ENCODE measurements at regions of chr1 and their contacts with region 1.

Region 1: DNA sequence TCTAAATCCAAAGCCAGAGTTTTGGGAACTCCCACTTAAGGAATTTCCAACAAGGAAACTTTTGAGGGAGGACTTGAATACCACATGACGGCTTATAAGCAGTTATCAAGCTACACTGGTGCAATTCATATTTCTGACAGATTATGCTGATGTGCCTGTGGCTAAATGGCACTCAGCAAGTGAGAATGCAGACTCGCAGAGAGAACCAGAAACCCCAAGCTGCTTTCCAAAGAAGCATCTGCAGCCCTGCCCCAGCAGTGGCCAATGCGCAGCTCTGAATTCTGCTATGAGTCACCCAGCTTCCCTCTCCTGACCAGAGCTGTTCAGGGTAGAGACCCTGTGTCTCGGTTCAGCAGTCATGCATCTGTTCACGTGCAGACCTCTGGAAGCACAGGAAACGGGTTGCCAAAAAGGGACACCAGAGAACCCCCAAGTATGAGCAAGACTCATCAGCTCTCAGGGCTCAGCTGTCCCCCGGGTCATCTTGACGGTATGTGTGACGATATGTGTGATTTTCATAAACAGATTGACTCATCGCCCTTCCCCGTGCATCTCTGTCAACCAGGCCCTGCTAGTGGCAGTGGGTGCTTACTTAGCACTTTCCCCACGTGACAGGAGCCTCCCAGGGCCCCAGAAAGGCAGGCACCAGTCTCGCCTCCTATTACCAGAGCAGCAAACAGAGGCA is 76.3 kb downstream of the ITPKB start:
- DNase-seq: peak; percentile 73
- ATAC-seq: peak; percentile 84
- H3K4me3 Mint-ChIP-seq: peak overlapping the region; percentile 56
- H3K27ac Mint-ChIP-seq: peak overlapping the region; percentile 92
- H3K4me1 Mint-ChIP-seq: peaks cover 89% of the 10 kb centered on the region
- H3K27me3 Mint-ChIP-seq: no peaks in the 10 kb centered on the region
- CTCF ChIP-seq: no peak

Region 2: DNA sequence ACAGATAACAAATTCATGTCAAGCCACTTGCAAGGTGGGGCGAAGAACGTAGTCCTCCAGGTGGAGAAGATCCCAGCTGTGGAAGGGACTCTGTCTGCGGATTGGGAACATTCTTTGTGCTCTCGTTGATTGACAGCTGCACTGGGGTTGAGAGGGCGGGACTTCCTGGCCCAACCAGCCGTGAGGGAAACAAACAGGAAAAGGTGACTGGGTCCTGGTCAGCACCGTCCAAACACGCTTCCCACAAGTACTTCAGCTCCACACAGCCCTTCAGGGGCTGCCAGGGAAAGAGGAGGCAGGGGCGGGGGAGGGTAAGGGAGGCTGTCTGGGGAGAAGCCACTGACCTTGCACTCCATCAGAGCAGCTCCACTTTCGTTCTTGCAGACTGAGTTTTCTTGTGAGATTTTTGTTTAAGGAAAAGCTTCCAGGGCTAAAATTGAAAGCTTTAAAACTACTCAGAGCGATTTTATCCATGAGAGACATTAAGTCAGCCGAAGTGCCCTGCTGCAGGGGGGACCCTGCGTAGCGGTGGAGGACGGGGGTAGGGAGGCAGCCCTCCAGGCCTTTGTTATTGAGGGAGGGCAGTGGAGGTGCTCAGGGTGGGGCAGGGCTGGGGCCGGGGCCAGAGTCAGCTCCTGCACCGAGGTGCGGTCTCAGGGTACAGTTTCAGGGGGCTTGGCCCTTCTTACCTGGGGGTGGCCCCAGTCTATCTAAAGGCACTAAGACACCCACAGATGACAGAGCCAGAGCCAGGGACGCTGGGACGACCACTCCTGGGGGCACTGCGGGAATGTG is 135.8 kb before region 1 on chr1:
- CTCF ChIA-PET with region 1: no interaction called
- POLR2A ChIA-PET with region 1: no interaction called
- intact Hi-C with region 1: no loop called
- DNase-seq: no peak
- ATAC-seq: no peak
- H3K4me3 Mint-ChIP-seq: no peak overlapping the region
- H3K27ac Mint-ChIP-seq: no peak overlapping the region
- H3K4me1 Mint-ChIP-seq: no peaks in the 10 kb centered on the region
- H3K27me3 Mint-ChIP-seq: peaks cover 12% of the 10 kb centered on the region
- CTCF ChIP-seq: no peak

Region 3: GRCh38 chr1:226626577-226626956 is 36.2 kb before region 1 on chr1:
- CTCF ChIA-PET with region 1: interaction called, 12 read pairs
- POLR2A ChIA-PET with region 1: interaction called, 5 read pairs
- intact Hi-C with region 1: no loop called
- DNase-seq: peak; percentile 68
- ATAC-seq: peak; percentile 93
- H3K4me3 Mint-ChIP-seq: peak overlapping the region; percentile 55
- H3K27ac Mint-ChIP-seq: peak overlapping the region; percentile 59
- H3K4me1 Mint-ChIP-seq: peaks cover 47% of the 10 kb centered on the region
- H3K27me3 Mint-ChIP-seq: no peaks in the 10 kb centered on the region
- CTCF ChIP-seq: peak; percentile 76

Region 4: DNA sequence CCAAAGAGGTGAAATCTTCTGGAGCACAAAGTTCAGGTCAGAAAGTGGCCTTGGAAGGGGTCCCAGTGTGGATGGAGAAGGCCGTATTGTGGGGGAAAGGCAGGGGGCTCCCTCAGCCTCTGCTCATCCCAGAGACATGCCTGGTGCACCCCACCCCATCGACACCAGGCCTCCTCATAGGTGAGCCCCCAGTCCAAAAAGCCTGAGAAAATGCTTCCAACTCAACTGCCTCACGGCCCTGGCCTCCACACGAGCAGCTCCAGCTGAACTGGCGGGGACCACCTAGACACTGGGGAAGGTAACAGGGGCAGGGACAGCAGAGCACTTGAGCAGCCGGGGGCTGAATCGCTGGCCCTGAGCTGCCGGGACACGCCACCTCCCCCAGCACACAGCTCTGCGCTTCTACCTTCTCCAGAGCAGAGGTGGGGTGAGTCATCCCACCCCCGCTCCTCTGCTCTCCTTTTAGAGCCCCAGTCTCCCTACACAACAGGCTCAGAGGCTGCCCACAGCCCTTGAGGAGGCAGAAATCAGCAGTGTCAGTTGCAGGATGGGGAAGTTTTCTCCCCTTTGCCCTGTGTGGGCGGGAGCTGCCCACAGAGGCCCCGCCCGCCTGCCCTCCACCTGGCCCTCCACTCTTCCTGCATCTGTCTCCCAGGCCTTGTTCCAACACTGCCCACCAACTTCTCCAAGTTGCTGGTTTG is 19.8 kb before region 1 on chr1:
- CTCF ChIA-PET with region 1: interaction called, 31 read pairs
- POLR2A ChIA-PET with region 1: interaction called, 163 read pairs
- intact Hi-C with region 1: loop called (anchors 1 kb)
- DNase-seq: peak; percentile 52
- ATAC-seq: peak; percentile 63
- H3K4me3 Mint-ChIP-seq: peak overlapping the region; percentile 67
- H3K27ac Mint-ChIP-seq: peak overlapping the region; percentile 88
- H3K4me1 Mint-ChIP-seq: peaks cover 76% of the 10 kb centered on the region
- H3K27me3 Mint-ChIP-seq: no peaks in the 10 kb centered on the region
- CTCF ChIP-seq: no peak

Region 5: DNA sequence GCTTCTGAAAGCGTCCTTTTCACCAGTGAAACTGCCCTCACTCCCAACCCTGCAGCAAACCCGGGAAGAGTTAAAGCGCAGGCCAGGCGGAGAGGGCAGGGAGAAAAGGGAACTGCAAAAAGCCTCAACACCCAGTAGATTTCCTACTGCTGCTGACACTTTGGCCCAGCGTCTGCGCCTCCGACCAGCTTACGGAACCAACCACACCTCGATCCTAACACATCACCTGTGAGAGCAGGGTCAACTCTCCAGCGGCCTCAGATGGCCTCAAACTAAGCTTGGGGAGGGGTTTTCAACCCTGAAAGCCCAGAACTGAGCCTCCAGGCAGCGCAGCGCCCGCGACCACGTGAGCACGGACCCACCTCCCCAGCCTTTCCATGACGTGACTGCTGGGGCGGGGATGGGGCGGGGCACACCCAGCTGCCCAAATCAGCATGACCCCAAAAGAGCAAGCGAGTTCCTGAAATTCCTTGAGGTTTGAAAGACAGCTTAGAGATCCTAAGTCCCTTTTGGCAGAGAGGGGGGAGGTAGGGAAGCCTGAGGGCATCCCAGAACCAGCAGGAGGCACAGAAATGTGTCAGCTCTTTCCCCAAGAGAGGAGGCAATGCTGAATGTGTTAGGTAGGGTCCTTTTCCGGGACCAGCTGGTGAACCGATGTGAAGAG is 17.2 kb after region 1 on chr1:
- CTCF ChIA-PET with region 1: interaction called, 13 read pairs
- POLR2A ChIA-PET with region 1: interaction called, 451 read pairs
- intact Hi-C with region 1: loop called (anchors 1 kb)
- DNase-seq: peak; percentile 69
- ATAC-seq: peak; percentile 38
- H3K4me3 Mint-ChIP-seq: peak overlapping the region; percentile 86
- H3K27ac Mint-ChIP-seq: peak overlapping the region; percentile 97
- H3K4me1 Mint-ChIP-seq: peaks cover 99% of the 10 kb centered on the region
- H3K27me3 Mint-ChIP-seq: no peaks in the 10 kb centered on the region
- CTCF ChIP-seq: no peak

Region 6: GRCh38 chr1:226697151-226697939 is 34.6 kb after region 1 on chr1:
- CTCF ChIA-PET with region 1: interaction called, 11 read pairs
- POLR2A ChIA-PET with region 1: interaction called, 261 read pairs
- intact Hi-C with region 1: loop called (anchors 1 kb)
- DNase-seq: peak; percentile 54
- ATAC-seq: peak; percentile 82
- H3K4me3 Mint-ChIP-seq: peak overlapping the region; percentile 77
- H3K27ac Mint-ChIP-seq: peak overlapping the region; percentile 96
- H3K4me1 Mint-ChIP-seq: peaks cover 94% of the 10 kb centered on the region
- H3K27me3 Mint-ChIP-seq: no peaks in the 10 kb centered on the region
- CTCF ChIP-seq: no peak

Region 7: DNA sequence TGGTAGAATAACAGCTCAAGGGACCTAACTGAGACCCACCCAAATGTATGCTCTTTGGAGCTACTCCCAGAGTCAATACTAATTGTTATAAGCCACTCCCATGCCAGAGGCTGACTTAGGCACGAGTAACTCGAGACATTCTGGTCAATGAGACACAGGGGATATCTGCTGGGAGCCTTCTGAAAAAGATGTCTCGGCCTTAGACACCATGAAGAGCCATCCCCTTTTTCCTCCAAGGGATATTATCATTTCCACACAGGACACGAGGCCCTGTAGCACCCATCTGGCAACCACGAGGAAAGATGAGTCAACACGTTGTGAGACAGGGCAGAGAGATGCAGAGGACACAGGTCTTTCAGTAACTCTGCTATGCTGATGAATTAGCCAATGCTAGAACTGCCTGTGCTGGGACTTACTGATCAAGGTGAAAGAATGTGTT is 45.6 kb after region 1 on chr1:
- CTCF ChIA-PET with region 1: interaction called, 4 read pairs
- POLR2A ChIA-PET with region 1: interaction called, 261 read pairs
- intact Hi-C with region 1: loop called (anchors 1 kb)
- DNase-seq: no peak
- ATAC-seq: no peak
- H3K4me3 Mint-ChIP-seq: no peak overlapping the region
- H3K27ac Mint-ChIP-seq: peak overlapping the region; percentile 76
- H3K4me1 Mint-ChIP-seq: peaks cover 85% of the 10 kb centered on the region
- H3K27me3 Mint-ChIP-seq: no peaks in the 10 kb centered on the region
- CTCF ChIP-seq: no peak

Region 8: DNA sequence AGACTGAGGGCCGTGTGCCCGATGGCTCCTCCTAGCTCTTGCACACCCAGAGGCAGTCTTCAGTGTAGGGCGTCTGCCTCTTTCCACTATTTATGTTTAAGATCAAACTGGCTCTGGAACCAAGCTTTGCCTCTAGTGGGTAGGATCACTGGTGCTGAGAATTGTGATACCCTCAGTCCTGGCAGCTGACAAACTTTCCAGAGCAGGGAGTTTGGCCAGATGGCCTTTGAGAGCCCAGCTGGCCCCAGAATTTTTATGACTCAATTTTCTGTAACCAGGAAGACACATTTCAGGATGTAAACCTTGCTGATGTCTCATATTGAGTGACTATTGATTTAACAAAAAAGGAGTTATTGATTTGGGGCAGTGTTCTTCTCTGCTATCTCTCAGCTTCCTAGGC is 284.1 kb after region 1 on chr1:
- CTCF ChIA-PET with region 1: no interaction called
- POLR2A ChIA-PET with region 1: no interaction called
- intact Hi-C with region 1: no loop called
- DNase-seq: no peak
- ATAC-seq: no peak
- H3K4me3 Mint-ChIP-seq: no peak overlapping the region
- H3K27ac Mint-ChIP-seq: no peak overlapping the region
- H3K4me1 Mint-ChIP-seq: peaks cover 60% of the 10 kb centered on the region
- H3K27me3 Mint-ChIP-seq: no peaks in the 10 kb centered on the region
- CTCF ChIP-seq: no peak

Measured in activated B cell treated with CpG ODN at 0.5 μM for 24 hours (primary cell).